Sigmoid colon (tissue), 7 donors: ENCODE measurements at regions of chr10 and their contacts with region 1.

Region 1: GRCh38 chr10:103592186-103593021 is 98.9 kb downstream of the NEURL1 start:
- DNase-seq: no peak
- H3K4me3 ChIP-seq: no peak overlapping the region
- H3K27ac ChIP-seq: no peak overlapping the region
- H3K4me1 ChIP-seq: no peaks in the 10 kb centered on the region
- H3K27me3 ChIP-seq: no peaks in the 10 kb centered on the region
- CTCF ChIP-seq: peak in 3 of 4 experiments; percentile 28 to 69 (median 31)
- EP300 ChIP-seq: no peak
- POLR2A ChIP-seq: no peak

Region 2: GRCh38 chr10:103416436-103417147 is 175.8 kb before region 1 on chr10:
- intact Hi-C with region 1: loop called (anchors 5 kb)
- DNase-seq: peak; percentile 78
- H3K4me3 ChIP-seq: no peak overlapping the region
- H3K27ac ChIP-seq: no peak overlapping the region
- H3K4me1 ChIP-seq: no peaks in the 10 kb centered on the region
- H3K27me3 ChIP-seq: no peaks in the 10 kb centered on the region
- CTCF ChIP-seq: peak in 3 of 4 experiments; percentile 21 to 56 (median 36)
- EP300 ChIP-seq: no peak
- POLR2A ChIP-seq: no peak

Region 3: DNA sequence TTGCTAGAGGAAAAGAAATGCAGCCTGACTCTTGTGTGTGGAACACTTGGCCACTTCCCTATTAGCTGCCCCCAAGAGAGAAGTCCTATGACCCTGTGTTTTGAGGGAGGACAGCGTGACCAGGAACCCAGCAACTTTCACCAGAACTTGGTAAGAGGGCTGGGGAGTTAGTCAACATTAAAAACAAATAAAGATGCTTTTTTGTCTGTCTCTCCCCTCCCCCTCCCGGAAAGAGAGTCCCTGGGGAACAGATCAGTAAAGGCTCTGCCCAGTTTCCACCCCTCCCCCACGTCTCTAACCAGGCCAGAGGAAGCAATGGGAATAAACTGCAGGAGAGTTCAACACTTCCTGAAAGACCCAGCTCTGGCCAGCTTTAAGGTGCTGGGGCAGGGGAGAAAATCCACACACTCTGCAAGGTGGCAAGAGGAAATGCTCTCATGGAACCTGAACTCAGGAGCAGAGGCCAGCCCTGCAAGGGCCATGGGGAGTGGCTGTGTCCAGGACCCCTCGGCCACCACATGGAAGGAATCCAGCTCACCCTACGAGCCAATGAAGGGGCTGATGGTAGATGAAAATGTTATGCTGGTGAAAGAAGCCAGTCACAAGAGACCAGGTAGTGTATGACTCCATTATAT is 241.4 kb after region 1 on chr10:
- intact Hi-C with region 1: no loop called
- DNase-seq: peak; percentile 87
- H3K4me3 ChIP-seq: no peak overlapping the region
- H3K27ac ChIP-seq: peak overlapping the region; percentile 8 to 62 (median 42)
- H3K4me1 ChIP-seq: peaks cover 0 to 34% (median 26%) of the 10 kb centered on the region in 4 donors
- H3K27me3 ChIP-seq: no peaks in the 10 kb centered on the region
- CTCF ChIP-seq: no peak
- EP300 ChIP-seq: no peak
- POLR2A ChIP-seq: no peak